Activated naive CD4-positive, alpha-beta T cell treated with anti-CD3 and anti-CD28 coated beads, Interleukin-2, amount 10 ng/mL, durations not matched to agents 7 days and 5 days (primary cell): ENCODE measurements at regions of chr9 and their contacts with region 1.

Region 1: DNA sequence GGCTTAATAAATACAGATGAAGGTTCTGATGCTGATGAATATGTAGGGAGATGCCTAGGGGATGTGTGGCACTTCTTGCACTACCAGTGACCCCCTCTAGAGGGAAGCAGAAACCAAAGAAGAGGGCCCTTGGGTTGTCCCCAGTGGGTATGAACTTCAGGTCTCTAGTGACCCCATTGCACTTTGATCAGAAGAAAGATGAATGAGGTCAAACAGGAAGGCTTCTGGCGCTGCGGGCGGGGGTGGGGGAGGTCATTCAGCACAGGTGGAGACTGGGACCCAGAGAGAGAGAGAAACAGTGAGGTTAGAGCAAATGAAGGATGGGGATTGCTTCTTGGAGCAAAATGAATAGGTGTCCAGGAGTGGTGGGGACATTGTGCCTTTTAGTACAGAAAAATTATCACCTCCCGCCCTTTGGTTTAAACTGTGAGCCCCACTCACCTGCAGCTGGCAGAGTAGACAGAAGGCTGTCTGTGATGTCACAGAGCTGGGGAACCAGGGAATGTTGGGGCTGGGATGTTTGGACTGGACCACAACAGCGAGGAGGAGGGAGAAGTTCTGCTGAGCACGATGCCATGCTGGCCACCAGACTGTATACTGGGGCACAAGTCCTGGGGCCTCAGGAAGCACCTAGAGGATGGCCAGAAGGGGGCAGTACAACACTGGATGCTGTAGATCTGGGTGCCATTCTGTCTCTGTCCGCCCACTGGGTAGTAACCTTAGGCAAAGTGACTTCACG is at the start of gene TEX48:
- DNase-seq: peak; percentile 88
- H3K4me3 Mint-ChIP-seq: no peak within 1 kb of the TSS
- H3K27ac Mint-ChIP-seq: peak within 1 kb of the TSS; percentile 88
- H3K4me1 Mint-ChIP-seq: peaks cover 64% of the 10 kb centered on the region
- H3K27me3 Mint-ChIP-seq: peaks cover 4% of the 10 kb centered on the region

Region 2: DNA sequence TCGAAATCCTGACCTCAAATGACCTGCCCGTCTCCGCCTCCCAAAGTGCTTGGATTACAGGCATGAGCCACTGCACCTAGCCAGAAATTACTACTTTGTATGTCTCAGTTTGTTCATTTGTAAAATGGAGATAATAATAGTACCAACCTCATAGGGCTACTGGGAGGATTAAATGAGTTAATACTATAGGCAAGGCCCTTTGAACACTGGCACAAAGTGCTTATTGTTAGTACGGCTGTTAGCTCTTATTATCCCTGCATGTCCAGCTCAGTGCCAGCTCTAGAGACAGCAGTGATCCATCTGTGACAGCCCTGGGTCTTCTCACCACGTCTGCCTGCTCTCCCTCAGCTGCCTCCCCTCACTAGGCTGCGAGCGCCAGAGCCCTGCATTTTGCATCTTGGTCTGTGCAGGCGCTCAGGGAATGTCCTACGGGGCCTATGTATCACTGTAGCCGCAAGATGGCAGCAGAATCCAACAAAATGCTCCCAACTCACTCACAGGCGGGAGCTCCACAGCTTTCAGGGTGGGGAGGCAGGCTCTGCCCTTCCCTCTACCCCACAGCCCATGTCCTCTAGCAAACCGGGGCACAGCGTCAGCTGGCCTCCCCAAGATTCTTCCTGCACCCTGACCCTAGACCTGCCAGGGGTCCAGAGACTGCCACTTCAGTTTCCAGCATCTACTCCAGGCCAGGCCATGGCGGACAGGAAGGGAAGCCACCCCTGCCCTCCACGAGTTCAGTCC is 276.3 kb before region 1 on chr9:
- CTCF ChIA-PET with region 1: interaction called, 25 read pairs
- DNase-seq: peak; percentile 89
- H3K4me3 Mint-ChIP-seq: no peak overlapping the region
- H3K27ac Mint-ChIP-seq: no peak overlapping the region
- H3K4me1 Mint-ChIP-seq: peaks cover 5% of the 10 kb centered on the region
- H3K27me3 Mint-ChIP-seq: peaks cover 32% of the 10 kb centered on the region

Region 3: GRCh38 chr9:114662081-114662989 is 19.4 kb before region 1 on chr9:
- CTCF ChIA-PET with region 1: interaction called, 23 read pairs
- DNase-seq: peak; percentile 77
- H3K4me3 Mint-ChIP-seq: no peak overlapping the region
- H3K27ac Mint-ChIP-seq: no peak overlapping the region
- H3K4me1 Mint-ChIP-seq: peaks cover 4% of the 10 kb centered on the region
- H3K27me3 Mint-ChIP-seq: peaks cover 30% of the 10 kb centered on the region

Region 4: DNA sequence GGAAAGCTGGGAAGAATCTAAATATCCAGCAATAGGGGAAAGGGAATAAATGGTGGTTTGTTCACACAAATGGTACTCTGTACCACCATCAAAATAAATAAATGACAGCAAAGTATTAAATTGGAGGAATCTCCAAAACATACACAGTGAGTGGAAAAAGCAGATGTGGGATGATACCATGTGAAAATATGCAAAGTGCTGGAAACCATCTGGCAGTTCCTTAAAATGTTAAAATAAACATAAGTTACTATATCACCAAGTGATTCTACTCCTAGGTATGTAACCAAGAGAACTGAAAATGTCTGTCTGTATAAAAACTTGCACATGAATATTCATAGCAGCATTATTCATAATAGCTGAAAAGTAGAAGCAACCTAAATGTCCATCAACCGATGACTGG is 42.2 kb after region 1 on chr9:
- CTCF ChIA-PET with region 1: interaction called, 15 read pairs
- DNase-seq: no peak
- H3K4me3 Mint-ChIP-seq: no peak overlapping the region
- H3K27ac Mint-ChIP-seq: no peak overlapping the region
- H3K4me1 Mint-ChIP-seq: peaks cover 63% of the 10 kb centered on the region
- H3K27me3 Mint-ChIP-seq: peaks cover 4% of the 10 kb centered on the region

Region 5: DNA sequence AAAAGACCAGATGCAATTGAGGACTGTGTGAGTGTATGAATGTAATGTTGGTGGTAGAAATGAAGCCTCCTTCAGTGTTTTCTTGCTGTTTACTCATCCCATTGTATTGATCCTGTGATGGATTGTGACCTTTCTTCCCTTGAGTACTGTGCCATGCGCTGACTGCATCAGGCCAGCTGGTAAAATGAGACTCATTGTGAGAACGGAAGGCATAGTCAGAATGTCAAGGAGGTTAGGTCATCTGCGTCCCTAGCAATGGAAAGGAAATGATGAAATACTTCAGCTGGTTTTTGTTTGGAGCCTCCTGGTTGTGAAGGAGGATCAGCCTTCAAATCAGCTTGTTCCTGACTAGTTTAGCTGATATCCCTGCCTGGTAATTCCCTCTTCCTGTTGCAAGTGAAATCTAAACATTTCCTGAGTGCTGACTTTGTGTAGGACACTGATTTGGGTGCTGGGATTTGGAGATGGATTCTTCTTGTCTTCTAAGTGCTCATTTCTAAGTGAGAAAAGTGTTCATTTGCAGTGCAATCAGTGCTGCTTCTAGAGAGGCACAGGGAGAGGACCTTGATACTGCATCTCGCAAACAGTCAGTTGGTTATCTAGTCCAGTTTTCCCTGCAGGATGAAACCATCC is 213.2 kb after region 1 on chr9:
- CTCF ChIA-PET with region 1: interaction called, 11 read pairs
- DNase-seq: no peak
- H3K4me3 Mint-ChIP-seq: no peak overlapping the region
- H3K27ac Mint-ChIP-seq: peak overlapping the region; percentile 77
- H3K4me1 Mint-ChIP-seq: peaks cover 14% of the 10 kb centered on the region
- H3K27me3 Mint-ChIP-seq: no peaks in the 10 kb centered on the region

Region 6: DNA sequence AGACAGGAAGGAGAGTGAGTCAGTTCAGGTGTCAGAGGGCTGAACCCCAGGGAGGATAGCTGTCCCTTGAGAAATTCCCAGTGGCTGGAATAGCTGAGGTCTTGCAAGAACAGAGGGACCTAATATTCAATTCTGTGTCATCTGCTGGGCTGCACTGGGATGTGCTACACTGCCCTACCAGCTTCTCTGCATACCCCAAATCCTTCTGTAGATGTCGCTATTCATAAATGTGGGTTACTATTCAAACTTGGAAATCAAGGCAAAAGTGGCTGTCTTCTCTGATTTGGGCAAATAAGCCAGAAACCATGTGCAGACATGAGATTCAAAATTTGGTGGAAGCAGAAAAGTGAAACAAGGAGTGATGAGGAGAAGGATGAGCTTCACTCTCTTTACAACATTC is 232.4 kb after region 1 on chr9:
- CTCF ChIA-PET with region 1: interaction called, 149 read pairs
- DNase-seq: no peak
- H3K4me3 Mint-ChIP-seq: no peak overlapping the region
- H3K27ac Mint-ChIP-seq: peak overlapping the region; percentile 8
- H3K4me1 Mint-ChIP-seq: peaks cover 93% of the 10 kb centered on the region
- H3K27me3 Mint-ChIP-seq: no peaks in the 10 kb centered on the region

Region 7: GRCh38 chr9:115008536-115009270 is 326.9 kb after region 1 on chr9:
- CTCF ChIA-PET with region 1: interaction called, 43 read pairs
- DNase-seq: no peak
- H3K4me3 Mint-ChIP-seq: no peak overlapping the region
- H3K27ac Mint-ChIP-seq: no peak overlapping the region
- H3K4me1 Mint-ChIP-seq: peaks cover 61% of the 10 kb centered on the region
- H3K27me3 Mint-ChIP-seq: no peaks in the 10 kb centered on the region